ENCODE measurements at regions of chr14 and their contacts with region 1.

Region 1: GRCh38 chr14:81220830-81221578 is at the start of gene GTF2A1:
- DNase-seq: peak; percentile 93
- H3K4me3 Mint-ChIP-seq: peak within 1 kb of the TSS; percentile 99
- H3K27ac Mint-ChIP-seq: peak within 1 kb of the TSS; percentile 99
- H3K4me1 Mint-ChIP-seq: peaks cover 46% of the 10 kb centered on the region
- H3K27me3 Mint-ChIP-seq: no peaks in the 10 kb centered on the region
- total RNA-seq, gene GTF2A1: 41.0 and 42.7 TPM in 2 replicates

Region 2: DNA sequence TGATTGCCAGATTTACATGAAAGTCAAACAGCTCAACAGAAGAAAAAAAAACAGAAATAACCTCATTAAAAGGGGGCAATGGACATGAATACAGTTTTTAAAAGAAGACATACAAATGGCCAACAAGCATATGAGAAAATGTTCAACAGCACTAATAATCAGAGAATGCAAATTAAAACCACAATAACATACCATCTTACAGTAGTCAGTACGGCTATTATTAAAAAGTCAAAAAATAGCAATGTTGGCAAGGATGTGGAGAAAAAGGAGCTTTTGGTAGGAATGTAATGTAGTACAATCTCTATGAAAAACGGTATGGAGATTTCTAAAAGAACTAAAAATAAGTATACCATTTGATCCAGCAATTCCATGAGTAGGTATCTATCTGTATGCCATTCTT is 551.6 kb before region 1 on chr14:
- intact Hi-C with region 1: no loop called
- DNase-seq: no peak
- H3K4me3 Mint-ChIP-seq: no peak overlapping the region
- H3K27ac Mint-ChIP-seq: no peak overlapping the region
- H3K4me1 Mint-ChIP-seq: no peaks in the 10 kb centered on the region
- H3K27me3 Mint-ChIP-seq: no peaks in the 10 kb centered on the region

Region 3: GRCh38 chr14:80987235-80988032 is 233.6 kb before region 1 on chr14:
- intact Hi-C with region 1: loop called (anchors 2 kb)
- DNase-seq: peak; percentile 55
- H3K4me3 Mint-ChIP-seq: no peak overlapping the region
- H3K27ac Mint-ChIP-seq: no peak overlapping the region
- H3K4me1 Mint-ChIP-seq: peaks cover 10% of the 10 kb centered on the region
- H3K27me3 Mint-ChIP-seq: peaks cover under 1% of the 10 kb centered on the region

Region 4: GRCh38 chr14:81170104-81170828 is 50.7 kb before region 1 on chr14:
- intact Hi-C with region 1: loop called (anchors 1 kb)
- DNase-seq: peak; percentile 82
- H3K4me3 Mint-ChIP-seq: peak overlapping the region; percentile 89
- H3K27ac Mint-ChIP-seq: peak overlapping the region; percentile 94
- H3K4me1 Mint-ChIP-seq: peaks cover 40% of the 10 kb centered on the region
- H3K27me3 Mint-ChIP-seq: no peaks in the 10 kb centered on the region

Region 5: GRCh38 chr14:81200054-81200453 is 20.9 kb before region 1 on chr14:
- intact Hi-C with region 1: loop called (anchors 1 kb)
- DNase-seq: no peak
- H3K4me3 Mint-ChIP-seq: no peak overlapping the region
- H3K27ac Mint-ChIP-seq: no peak overlapping the region
- H3K4me1 Mint-ChIP-seq: peaks cover 19% of the 10 kb centered on the region
- H3K27me3 Mint-ChIP-seq: no peaks in the 10 kb centered on the region

Region 6: GRCh38 chr14:81474148-81474492 is 253.1 kb after region 1 on chr14:
- intact Hi-C with region 1: loop called (anchors 1 kb)
- DNase-seq: no peak
- H3K4me3 Mint-ChIP-seq: peak overlapping the region; percentile 27
- H3K27ac Mint-ChIP-seq: peak overlapping the region; percentile 53
- H3K4me1 Mint-ChIP-seq: peaks cover 52% of the 10 kb centered on the region
- H3K27me3 Mint-ChIP-seq: no peaks in the 10 kb centered on the region